T-cell (primary cell): ENCODE measurements at regions of chr2 and their contacts with region 1.

Region 1: GRCh38 chr2:228559774-228560415 is 378.4 kb upstream of the SPHKAP start:
- DNase-seq: no peak
- ATAC-seq: no peak
- H3K4me3 ChIP-seq: no peak overlapping the region
- H3K4me3 Mint-ChIP-seq: no peak overlapping the region
- H3K27ac ChIP-seq: no peak overlapping the region
- H3K27ac Mint-ChIP-seq: no peak overlapping the region
- H3K4me1 ChIP-seq: no peaks in the 10 kb centered on the region
- H3K4me1 Mint-ChIP-seq: no peaks in the 10 kb centered on the region
- H3K27me3 ChIP-seq: no peaks in the 10 kb centered on the region
- H3K27me3 Mint-ChIP-seq: no peaks in the 10 kb centered on the region

Region 2: GRCh38 chr2:228474466-228474865 is 85.4 kb before region 1 on chr2:
- CTCF ChIA-PET with region 1: no interaction called
- POLR2A ChIA-PET with region 1: interaction called in 1 of 2 experiments, 10 read pairs
- DNase-seq: no peak
- ATAC-seq: no peak
- H3K4me3 ChIP-seq: no peak overlapping the region
- H3K4me3 Mint-ChIP-seq: no peak overlapping the region
- H3K27ac ChIP-seq: no peak overlapping the region
- H3K27ac Mint-ChIP-seq: no peak overlapping the region
- H3K4me1 ChIP-seq: no peaks in the 10 kb centered on the region
- H3K4me1 Mint-ChIP-seq: no peaks in the 10 kb centered on the region
- H3K27me3 ChIP-seq: no peaks in the 10 kb centered on the region
- H3K27me3 Mint-ChIP-seq: no peaks in the 10 kb centered on the region

Region 3: GRCh38 chr2:228527197-228527881 is 32.6 kb before region 1 on chr2:
- CTCF ChIA-PET with region 1: no interaction called
- POLR2A ChIA-PET with region 1: no interaction called
- DNase-seq: no peak
- ATAC-seq: no peak
- H3K4me3 ChIP-seq: no peak overlapping the region
- H3K4me3 Mint-ChIP-seq: no peak overlapping the region
- H3K27ac ChIP-seq: no peak overlapping the region
- H3K27ac Mint-ChIP-seq: no peak overlapping the region
- H3K4me1 ChIP-seq: no peaks in the 10 kb centered on the region
- H3K4me1 Mint-ChIP-seq: no peaks in the 10 kb centered on the region
- H3K27me3 ChIP-seq: no peaks in the 10 kb centered on the region
- H3K27me3 Mint-ChIP-seq: no peaks in the 10 kb centered on the region